Right ventricle myocardium superior (tissue), 1 donor: ENCODE measurements at regions of chr6 and their contacts with region 1.

Region 1: DNA sequence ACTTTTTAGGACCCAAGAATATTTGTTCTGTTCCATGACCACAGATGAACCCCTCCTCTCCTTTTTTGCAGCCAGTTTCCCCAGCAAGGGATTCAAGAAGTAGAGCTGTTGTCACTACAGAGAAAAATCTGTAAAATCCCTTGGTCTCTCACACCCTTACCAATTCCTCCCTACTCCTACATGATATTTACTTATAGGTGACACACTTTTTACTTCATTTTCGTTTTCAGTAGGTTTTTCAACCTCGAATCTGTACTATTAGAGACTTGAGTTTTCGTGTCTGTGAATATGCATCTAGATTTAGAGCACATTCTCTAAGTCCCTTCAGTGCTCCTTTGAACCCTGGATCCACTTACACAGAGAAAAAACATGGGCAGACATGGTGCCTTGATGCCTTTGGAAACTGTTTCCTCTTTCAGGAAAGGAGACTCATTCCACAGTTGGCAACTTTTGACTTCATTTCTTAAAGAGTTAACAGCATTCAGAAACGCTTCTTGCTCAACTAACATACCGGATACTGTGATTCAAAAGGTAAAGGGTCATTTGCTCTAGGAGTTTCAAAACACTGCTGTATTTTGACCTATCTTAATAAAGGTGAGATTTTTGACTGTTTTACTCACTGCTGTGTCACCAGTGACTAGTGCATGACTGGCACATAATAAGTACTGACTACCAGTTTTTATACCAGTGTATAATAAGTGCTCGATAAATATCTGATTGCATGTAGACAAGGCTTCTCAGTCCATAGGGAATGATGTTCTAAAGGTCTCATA is 50.6 kb downstream of the LAMA4 start:
- DNase-seq: no peak
- ATAC-seq: no peak

Region 2: DNA sequence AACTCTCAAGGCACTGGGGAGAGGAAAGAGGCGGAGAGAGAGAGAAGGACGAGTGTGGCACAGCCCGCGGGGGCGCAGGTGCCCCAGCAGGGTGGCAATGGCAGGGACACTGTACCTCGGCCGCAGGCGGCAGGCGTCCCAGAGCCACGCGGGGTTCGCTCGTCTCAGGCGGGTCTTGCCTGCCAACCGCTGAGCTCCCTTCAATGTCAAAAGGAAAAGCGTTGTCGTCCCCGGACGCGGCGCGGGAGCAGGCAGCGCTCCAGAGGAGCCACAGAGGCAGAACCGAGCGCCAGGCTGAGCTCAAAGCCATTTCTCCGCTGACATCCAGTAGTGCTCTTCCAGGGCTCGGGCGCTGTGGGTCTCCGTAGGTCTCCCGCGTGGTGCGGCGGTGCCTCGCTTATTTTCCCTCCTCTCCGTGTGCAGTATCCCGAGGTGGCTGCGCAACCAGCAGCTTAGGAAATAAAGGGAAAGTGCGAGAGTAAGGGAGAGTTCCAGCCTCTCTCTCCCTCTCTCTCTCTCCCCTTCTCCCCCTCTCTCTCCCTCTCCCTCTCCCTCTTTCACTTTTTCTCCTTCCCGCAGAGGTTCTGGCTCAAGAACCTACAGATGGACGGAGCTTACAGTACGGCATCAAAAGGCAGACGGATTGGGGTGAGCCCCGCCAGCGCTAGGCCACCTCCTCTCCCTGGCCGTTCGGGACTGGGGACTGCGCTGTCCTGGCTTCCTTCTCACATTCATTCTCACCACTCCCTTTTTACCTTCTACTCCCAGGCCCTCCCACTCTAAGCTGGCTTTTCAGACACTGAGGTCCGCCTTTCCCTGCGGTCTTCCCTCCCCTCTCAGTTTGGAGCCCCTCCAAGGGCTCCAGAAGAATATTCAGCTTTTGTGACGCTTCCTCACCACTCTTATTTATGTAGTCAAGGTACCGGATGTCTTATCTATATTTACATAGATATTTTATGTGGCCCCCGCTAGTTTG is 50.4 kb after region 1 on chr6 and contains the start of gene LAMA4:
- intact Hi-C with region 1: loop called (anchors 10 kb)
- DNase-seq: peak; percentile 81
- ATAC-seq: peak; percentile 74
- total RNA-seq, gene LAMA4: 71.1 TPM

Region 3: DNA sequence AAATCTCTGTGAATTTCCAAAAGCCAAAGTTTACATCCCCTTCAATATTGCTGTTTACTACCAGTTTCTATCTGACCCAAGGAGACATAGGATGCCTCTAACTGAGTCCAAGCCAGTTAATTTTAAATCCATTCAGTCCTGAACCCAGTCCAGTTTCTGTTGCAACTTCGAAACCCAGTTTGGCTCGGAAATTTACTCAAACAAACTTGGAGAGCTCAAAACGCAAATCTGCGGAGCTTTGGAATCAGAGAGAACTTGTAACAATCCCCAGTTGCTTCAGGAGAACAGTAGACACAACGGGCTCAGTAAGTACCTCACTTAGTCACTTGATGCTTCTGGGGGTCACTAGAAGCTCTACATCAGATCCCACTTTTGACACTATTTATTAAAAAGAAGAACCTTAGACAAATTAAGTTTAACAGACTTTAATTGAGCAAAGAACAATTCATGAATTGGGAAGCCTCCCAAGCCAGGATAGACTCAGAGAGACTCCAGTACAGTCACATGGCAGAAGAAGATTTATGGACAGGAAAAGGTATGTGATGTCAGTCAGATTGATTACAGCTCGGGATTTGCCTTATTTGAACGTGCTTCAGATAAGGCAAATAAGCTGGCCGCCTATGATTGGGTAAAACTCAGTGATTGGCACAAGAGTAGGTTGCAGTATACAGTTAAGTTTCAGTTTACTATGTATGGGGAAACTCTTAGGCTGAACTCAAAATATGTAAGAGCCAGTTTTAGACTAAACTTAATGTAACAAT is 261.3 kb after region 1 on chr6:
- intact Hi-C with region 1: no loop called
- DNase-seq: no peak
- ATAC-seq: no peak